PC-9 (cell line): ENCODE measurements at regions of chr14 and their contacts with region 1.

Region 1: GRCh38 chr14:51395361-51395849 is 155.4 kb downstream of the TMX1 start:
- DNase-seq: peak in 1 of 2 experiments; percentile 33
- H3K4me3 ChIP-seq: no peak overlapping the region
- H3K27ac ChIP-seq: peak overlapping the region; percentile 95
- H3K4me1 ChIP-seq: peaks cover 63% of the 10 kb centered on the region
- H3K27me3 ChIP-seq: no peaks in the 10 kb centered on the region
- CTCF ChIP-seq: no peak

Region 2: GRCh38 chr14:51293149-51293911 is 102.1 kb before region 1 on chr14:
- CTCF ChIA-PET with region 1: no interaction called
- POLR2A ChIA-PET with region 1: no interaction called
- intact Hi-C with region 1: loop called (anchors 5 kb)
- DNase-seq: no peak
- H3K4me3 ChIP-seq: no peak overlapping the region
- H3K27ac ChIP-seq: no peak overlapping the region
- H3K4me1 ChIP-seq: peaks cover 9% of the 10 kb centered on the region
- H3K27me3 ChIP-seq: no peaks in the 10 kb centered on the region
- CTCF ChIP-seq: no peak

Region 3: DNA sequence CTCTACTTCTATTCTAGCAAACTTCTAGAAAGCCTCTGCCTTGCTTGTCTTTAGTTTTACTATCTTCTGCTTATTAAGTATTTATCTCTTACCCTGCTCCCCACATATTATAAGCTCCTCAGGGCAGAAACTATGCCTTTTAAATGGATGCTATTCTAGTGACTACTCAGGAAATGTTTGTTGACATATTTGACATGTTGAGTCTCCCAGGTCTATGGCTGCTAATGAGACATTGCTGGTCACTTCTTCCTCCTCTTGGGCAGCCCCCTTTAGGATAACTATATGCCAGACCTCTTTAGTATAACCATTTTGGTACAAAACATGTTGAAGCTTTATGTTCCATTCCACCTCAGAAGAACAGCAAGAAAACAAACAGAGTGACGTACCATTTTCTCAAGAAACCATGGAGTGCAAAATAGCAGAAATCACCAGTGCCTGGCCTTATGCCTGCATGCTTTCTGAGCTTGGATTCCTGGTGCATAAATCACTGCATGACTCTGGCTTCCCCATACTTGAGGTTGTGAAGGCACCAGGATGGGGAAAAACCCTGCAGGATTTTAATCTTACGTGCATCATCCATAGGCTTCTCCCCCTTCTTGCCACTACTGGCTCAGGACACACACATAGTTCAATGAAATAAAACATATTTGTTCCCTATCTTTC is 47.2 kb after region 1 on chr14:
- CTCF ChIA-PET with region 1: interaction called, 4 read pairs
- POLR2A ChIA-PET with region 1: no interaction called
- intact Hi-C with region 1: loop called (anchors 2 kb)
- DNase-seq: peak; percentile 64 to 90
- H3K4me3 ChIP-seq: no peak overlapping the region; the same call in 1 of the 2 replicates
- H3K27ac ChIP-seq: peak overlapping the region; percentile 93
- H3K4me1 ChIP-seq: peaks cover 45% of the 10 kb centered on the region
- H3K27me3 ChIP-seq: no peaks in the 10 kb centered on the region
- CTCF ChIP-seq: no peak

Region 4: DNA sequence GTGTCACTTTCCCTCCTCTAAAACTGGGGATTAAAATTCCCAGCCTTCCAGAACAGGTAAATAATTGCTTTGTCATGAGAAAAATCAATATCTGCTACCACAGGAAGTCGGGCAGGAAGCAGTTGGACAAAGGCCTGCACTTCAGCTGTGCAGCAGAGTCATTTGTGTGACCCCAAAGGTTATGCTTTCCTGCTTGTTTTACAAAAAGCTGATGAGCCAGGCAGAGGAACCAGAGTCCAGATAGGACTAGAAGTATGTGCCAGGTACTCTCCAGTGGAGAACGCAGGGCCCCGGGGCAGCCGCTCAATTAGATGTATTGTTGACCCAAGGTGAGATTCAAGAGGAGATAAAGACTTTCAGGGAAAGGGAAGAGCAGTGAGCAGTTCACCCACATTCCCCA is 139.2 kb after region 1 on chr14:
- CTCF ChIA-PET with region 1: no interaction called
- POLR2A ChIA-PET with region 1: no interaction called
- intact Hi-C with region 1: loop called (anchors 1 kb)
- DNase-seq: peak; percentile 87 to 98
- H3K4me3 ChIP-seq: no peak overlapping the region
- H3K27ac ChIP-seq: peak overlapping the region; percentile 99
- H3K4me1 ChIP-seq: peaks cover 54% of the 10 kb centered on the region
- H3K27me3 ChIP-seq: no peaks in the 10 kb centered on the region
- CTCF ChIP-seq: no peak

Region 5: GRCh38 chr14:51547260-51547659 is 151.9 kb after region 1 on chr14:
- CTCF ChIA-PET with region 1: interaction called, 4 read pairs
- POLR2A ChIA-PET with region 1: interaction called, 3 read pairs
- intact Hi-C with region 1: loop called (anchors 2 kb)
- DNase-seq: peak; percentile 57 to 93
- H3K4me3 ChIP-seq: no peak overlapping the region
- H3K27ac ChIP-seq: peak overlapping the region; percentile 84
- H3K4me1 ChIP-seq: peaks cover 34% of the 10 kb centered on the region
- H3K27me3 ChIP-seq: no peaks in the 10 kb centered on the region
- CTCF ChIP-seq: no peak

Region 6: GRCh38 chr14:51638071-51638944 is 242.9 kb after region 1 on chr14:
- CTCF ChIA-PET with region 1: no interaction called
- POLR2A ChIA-PET with region 1: interaction called, 6 read pairs
- intact Hi-C with region 1: loop called (anchors 5 kb)
- DNase-seq: peak in 1 of 2 experiments; percentile 74
- H3K4me3 ChIP-seq: no peak overlapping the region
- H3K27ac ChIP-seq: no peak overlapping the region
- H3K4me1 ChIP-seq: peaks cover 15% of the 10 kb centered on the region
- H3K27me3 ChIP-seq: no peaks in the 10 kb centered on the region
- CTCF ChIP-seq: no peak

Region 7: DNA sequence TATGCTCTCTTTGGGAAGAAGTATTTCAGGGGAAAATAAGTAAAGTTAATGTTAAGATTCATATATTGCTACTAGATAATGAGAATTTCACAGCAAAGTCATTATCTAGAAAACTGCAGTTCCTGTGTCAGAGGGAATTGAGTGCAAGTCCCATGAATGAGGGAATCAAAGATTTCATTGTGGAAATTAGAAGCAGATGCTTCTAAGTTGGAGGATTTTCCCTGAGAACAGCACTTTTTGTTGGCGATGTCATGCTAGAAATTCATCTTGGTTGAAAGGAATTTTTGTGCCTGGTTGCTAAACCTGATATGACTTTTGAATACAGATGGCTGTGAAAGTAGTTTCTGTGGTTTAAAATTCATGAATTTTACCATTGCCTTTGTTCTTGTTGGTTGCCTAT is 281.9 kb after region 1 on chr14:
- CTCF ChIA-PET with region 1: no interaction called
- POLR2A ChIA-PET with region 1: interaction called, 14 read pairs
- intact Hi-C with region 1: no loop called
- DNase-seq: no peak
- H3K4me3 ChIP-seq: no peak overlapping the region
- H3K27ac ChIP-seq: no peak overlapping the region
- H3K4me1 ChIP-seq: peaks cover 6% of the 10 kb centered on the region; the same call in 1 of the 2 replicates
- H3K27me3 ChIP-seq: no peaks in the 10 kb centered on the region
- CTCF ChIP-seq: no peak